Breast epithelium (tissue), 4 donors: ENCODE measurements at regions of chr3 and their contacts with region 1.

Region 1: DNA sequence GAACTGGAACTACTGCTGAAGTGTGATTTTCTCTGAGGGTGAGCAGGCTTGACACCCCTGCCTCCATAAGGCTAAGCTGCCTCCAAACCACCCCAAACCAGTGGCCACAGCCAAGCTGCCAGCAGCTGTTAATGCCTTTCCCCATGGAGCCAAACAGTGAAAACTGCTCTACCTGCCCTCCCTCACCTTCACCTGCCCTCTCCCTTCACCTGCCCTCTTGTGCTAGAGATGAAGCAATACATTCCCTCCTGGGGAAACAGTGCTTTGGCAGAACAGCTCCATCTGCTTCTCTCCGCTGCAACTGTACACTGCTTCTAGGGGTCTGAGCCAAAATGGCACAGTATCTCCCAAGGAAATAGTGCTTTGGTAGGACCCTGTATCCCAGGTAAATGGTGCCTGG is 374.1 kb downstream of the FHIT start:
- DNase-seq: no peak
- H3K4me3 ChIP-seq: no peak overlapping the region
- H3K27ac ChIP-seq: no peak overlapping the region
- H3K4me1 ChIP-seq: no peaks in the 10 kb centered on the region
- H3K27me3 ChIP-seq: no peaks in the 10 kb centered on the region
- CTCF ChIP-seq: no peak
- POLR2A ChIP-seq: no peak

Region 2: GRCh38 chr3:60636846-60637245 is 240.3 kb before region 1 on chr3:
- intact Hi-C with region 1: loop called (anchors 5 kb)
- DNase-seq: no peak
- H3K4me3 ChIP-seq: no peak overlapping the region
- H3K27ac ChIP-seq: no peak overlapping the region
- H3K4me1 ChIP-seq: no peaks in the 10 kb centered on the region
- H3K27me3 ChIP-seq: no peaks in the 10 kb centered on the region
- CTCF ChIP-seq: no peak
- POLR2A ChIP-seq: no peak